ENCODE measurements at regions of chr1 and their contacts with region 1.

Region 1: DNA sequence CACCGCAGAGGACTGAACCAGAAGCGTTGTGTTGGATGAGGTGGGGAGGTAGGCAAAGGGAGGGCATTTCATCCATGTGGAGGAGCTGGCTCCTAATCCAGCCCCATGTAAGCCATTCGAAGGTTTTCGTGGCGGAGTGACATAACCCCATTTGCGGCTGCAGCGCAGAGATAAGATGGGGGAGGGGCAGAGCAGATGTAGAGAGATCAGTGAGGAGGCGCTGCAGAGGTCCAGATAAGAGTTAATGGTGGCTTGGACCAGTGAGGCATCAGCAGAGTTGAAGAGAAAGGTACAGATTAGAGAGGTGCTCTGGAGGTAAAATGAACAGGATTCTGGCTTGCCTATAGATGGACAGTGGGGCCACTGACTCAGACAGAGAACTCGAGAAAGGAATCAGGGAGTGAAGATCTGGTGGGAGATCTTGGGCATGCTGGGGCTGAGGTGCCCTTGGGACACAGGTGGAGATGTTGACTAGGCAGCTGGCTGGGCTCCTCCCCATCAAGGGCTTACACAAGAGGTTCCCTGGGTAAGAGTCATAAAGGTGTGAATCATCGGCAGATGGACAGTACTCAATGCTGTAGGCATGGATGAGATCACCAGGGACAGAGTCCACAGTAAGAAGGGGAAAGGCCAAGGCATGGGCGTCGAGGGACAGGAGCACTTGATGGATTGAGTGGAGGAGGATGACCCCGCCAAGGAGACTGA is 7.8 kb upstream of the PTPRF start:
- DNase-seq: peak; percentile 83 to 97
- H3K4me3 ChIP-seq: no peak overlapping the region
- H3K27ac ChIP-seq: peak overlapping the region; percentile 50
- H3K4me1 ChIP-seq: peaks cover 25% of the 10 kb centered on the region
- H3K27me3 ChIP-seq: no peaks in the 10 kb centered on the region
- CTCF ChIP-seq: no peak

Region 2: DNA sequence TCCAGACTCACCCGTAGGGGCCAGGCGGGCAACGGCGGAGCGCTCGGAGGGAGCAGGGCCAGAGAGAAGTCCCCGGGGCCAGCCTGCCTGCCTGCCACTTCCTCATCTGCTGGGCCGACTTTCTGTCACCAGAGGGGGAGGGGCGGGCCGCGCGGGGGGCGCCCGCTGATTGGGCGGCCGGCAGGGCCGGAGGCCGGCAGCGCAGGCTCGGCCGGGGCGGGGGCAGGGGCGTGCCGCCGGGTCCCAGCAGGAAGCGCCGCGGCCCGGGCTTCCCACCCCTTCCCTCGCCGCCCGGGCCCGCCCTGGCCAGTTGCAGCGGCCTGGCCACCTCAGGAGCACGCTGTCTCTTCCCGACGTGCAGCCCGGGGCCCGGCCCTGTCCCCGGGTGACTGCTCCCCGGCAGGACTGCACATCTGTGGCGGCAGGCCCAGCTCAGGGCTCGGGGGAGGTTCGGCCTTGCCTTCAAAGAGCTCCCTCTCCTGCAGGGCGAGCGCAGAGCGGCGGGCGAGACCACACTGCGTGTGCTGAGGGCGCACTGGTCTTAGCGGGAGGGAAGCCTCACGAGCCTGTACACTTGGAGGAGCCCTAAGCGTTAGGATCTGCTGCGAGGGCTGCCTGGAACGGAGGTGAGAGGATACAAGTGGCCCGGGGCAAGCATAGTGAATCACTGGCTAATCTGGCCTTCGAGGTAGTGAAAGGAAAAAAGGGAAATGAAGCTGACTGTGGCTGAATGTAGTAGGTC is 154.9 kb before region 1 on chr1 and contains the start of gene ELOVL1:
- CTCF ChIA-PET with region 1: interaction called, 11 read pairs
- POLR2A ChIA-PET with region 1: interaction called, 3 read pairs
- intact Hi-C with region 1: no loop called
- DNase-seq: peak; percentile 82 to 96
- H3K4me3 ChIP-seq: peak within 1 kb of the TSS; percentile 99
- H3K27ac ChIP-seq: peak within 1 kb of the TSS; percentile 89
- H3K4me1 ChIP-seq: peaks cover 69% of the 10 kb centered on the region
- H3K27me3 ChIP-seq: no peaks in the 10 kb centered on the region
- CTCF ChIP-seq: peak; percentile 33; the same call in 1 of the 2 replicates
- total RNA-seq, gene ELOVL1: 131 TPM in 2 replicates

Region 3: DNA sequence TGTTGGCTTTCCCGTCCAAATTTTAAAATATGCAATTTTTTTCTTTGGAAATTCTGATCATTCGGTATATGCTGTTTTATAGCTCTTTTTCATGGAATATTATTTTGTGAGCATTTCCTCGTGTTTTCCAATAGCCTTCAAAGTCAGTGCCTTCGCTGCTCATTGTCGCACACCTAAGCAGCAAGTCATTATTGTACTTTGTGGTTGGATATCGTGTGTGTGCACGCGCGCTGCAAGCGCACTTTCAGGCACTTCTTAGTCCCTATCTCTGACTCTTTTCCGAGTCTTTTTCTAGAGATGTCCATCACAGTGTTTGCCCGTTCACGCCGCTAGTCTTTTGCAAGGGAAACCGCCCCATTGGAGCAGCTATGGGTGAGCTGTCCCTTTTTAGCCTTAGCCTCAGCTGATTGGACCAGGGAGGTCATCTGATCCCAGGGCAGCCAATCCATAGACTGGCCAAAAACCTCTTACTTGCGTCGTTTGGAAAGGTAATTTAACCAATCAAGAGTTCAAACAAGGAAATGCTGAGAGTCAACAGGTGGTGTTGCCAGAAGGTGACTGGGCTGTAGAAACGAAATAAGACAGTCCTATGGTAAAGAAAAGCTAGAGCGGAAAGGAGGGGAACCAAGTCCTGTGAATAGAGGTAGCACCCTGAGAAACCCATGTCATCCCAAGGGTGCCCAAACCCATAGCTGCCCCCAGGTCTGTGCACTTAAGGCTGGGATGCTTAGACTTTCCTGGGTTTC is 68.5 kb before region 1 on chr1:
- CTCF ChIA-PET with region 1: no interaction called
- POLR2A ChIA-PET with region 1: interaction called, 6 read pairs
- intact Hi-C with region 1: loop called (anchors 1 kb)
- DNase-seq: peak; percentile 77 to 89
- H3K4me3 ChIP-seq: peak overlapping the region; percentile 71
- H3K27ac ChIP-seq: peak overlapping the region; percentile 70
- H3K4me1 ChIP-seq: peaks cover 11% of the 10 kb centered on the region
- H3K27me3 ChIP-seq: no peaks in the 10 kb centered on the region
- CTCF ChIP-seq: no peak

Region 4: DNA sequence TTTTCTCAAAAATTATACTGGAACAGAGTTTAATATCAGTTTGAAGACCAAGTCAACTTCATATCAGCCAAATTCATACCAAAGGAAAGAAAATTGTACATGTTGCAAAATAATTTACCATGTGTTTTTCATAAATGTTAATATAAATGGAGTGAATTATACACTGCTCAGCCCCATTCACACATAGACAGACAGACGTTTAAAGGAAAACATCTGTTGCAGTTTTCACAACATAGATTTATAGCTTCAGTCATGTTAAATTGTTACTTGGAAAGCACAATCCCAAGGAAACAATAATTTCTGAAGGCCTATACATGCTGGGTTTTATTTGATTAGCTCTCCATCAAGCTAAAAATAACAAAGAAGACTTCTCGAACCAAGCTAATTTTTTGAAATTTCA is 41.4 kb before region 1 on chr1:
- CTCF ChIA-PET with region 1: no interaction called
- POLR2A ChIA-PET with region 1: no interaction called
- intact Hi-C with region 1: loop called (anchors 1 kb)
- DNase-seq: no peak
- H3K4me3 ChIP-seq: no peak overlapping the region
- H3K27ac ChIP-seq: no peak overlapping the region
- H3K4me1 ChIP-seq: peaks cover 18% of the 10 kb centered on the region
- H3K27me3 ChIP-seq: no peaks in the 10 kb centered on the region
- CTCF ChIP-seq: no peak

Region 5: GRCh38 chr1:43706598-43707495 is 183.9 kb after region 1 on chr1:
- CTCF ChIA-PET with region 1: no interaction called
- POLR2A ChIA-PET with region 1: interaction called, 11 read pairs
- intact Hi-C with region 1: loop called (anchors 5 kb)
- DNase-seq: peak; percentile 81 to 96
- H3K4me3 ChIP-seq: peak overlapping the region; percentile 92
- H3K27ac ChIP-seq: no peak overlapping the region
- H3K4me1 ChIP-seq: peaks cover 28% of the 10 kb centered on the region
- H3K27me3 ChIP-seq: no peaks in the 10 kb centered on the region
- CTCF ChIP-seq: no peak

Measured in PC-9 (cell line).